GM10248 (cell line): ENCODE measurements at regions of chr2 and their contacts with region 1.

Region 1: GRCh38 chr2:240560480-240561326 is 546 bp downstream of the DUSP28 start:
- DNase-seq: peak; percentile 96
- CTCF ChIP-seq: no peak

Region 2: GRCh38 chr2:240086563-240086962 is 474.1 kb before region 1 on chr2:
- CTCF ChIA-PET with region 1: no interaction called
- POLR2A ChIA-PET with region 1: no interaction called
- DNase-seq: no peak
- CTCF ChIP-seq: no peak

Region 3: DNA sequence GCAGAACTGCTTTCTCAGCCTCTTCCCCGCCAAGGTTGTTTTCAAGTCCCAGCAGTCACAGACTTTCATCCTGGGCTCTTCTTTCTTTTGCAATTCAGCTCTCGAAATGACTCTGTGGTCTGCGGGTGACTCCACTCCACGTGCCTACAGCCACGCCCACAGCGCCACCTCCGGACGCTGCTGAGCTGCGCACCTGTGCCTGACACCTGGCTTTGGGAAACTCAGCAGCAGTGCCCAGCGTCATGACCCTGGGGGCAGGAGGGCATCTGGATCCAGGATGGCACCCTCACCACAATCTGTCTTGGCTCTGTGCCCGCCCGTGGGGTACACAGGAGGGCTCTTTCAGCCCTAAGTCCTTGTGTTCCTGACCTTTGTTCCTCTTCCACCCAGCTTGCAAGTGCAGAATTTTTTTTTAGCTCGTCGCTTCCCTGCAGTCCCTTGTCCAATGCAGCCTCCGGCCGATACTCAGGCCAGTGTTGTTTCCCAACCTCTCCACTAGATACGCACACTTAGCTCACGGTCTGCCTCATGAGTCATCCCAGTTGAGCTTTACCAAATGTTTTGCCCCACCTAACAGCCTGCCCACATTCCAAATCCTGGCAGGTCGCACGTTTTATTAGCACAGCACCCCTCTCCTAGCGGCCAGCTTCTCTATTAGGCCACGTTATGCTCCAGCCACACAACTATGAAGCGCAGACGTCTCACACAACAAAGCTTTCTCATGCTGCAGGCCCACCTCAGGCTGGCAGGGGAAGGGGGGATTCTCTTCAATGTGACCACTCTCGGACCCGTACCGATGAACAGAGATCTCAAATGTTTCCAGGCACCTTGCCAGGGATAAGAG is 19.3 kb after region 1 on chr2:
- CTCF ChIA-PET with region 1: interaction called, 167 read pairs
- POLR2A ChIA-PET with region 1: interaction called, 34 read pairs
- DNase-seq: peak; percentile 76
- CTCF ChIP-seq: peak; percentile 34

Region 4: GRCh38 chr2:240586198-240586918 is 25.7 kb after region 1 on chr2 and contains the start of gene CAPN10:
- CTCF ChIA-PET with region 1: interaction called, 167 read pairs
- POLR2A ChIA-PET with region 1: interaction called, 34 read pairs
- DNase-seq: peak; percentile 95
- CTCF ChIP-seq: no peak